Natural killer cell (primary cell): ENCODE measurements at regions of chr2 and their contacts with region 1.

Region 1: DNA sequence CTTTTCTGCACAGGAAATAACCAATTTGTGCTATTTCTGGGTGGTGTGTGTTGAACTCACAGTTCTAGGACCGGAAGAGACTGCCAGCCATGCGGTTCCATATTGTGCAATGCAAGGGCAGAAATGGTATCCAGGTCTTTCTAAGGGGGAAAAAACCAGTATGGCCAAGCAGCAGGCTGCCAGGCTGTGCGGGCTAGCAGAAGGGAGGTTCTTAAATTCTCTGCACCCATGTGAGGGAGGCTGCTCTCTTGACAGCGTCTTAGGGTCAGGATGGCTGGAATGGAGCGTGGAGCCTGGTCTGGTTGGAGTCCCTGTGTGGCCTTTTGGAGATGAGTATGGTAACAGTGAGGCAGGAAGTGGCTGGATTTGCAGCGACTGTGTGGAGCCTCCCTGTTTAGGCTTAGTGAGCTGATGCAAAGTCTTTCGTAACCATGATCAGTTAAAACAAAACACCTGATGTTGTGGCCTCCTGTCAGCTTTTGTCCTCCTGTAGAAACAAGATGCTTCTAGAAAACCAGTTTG is 52.6 kb downstream of the NCK2 start:
- DNase-seq: peak; percentile 54 to 76
- ATAC-seq: peak; percentile 58 to 77 (median 76)
- H3K4me3 ChIP-seq: no peak overlapping the region
- H3K4me3 Mint-ChIP-seq: peak overlapping the region; percentile 81
- H3K27ac ChIP-seq: peak overlapping the region; percentile 69
- H3K27ac Mint-ChIP-seq: peak overlapping the region; percentile 91 to 93
- H3K4me1 ChIP-seq: peaks cover 88% of the 10 kb centered on the region
- H3K4me1 Mint-ChIP-seq: peaks cover 88% of the 10 kb centered on the region in 2 donors
- H3K27me3 ChIP-seq: no peaks in the 10 kb centered on the region
- H3K27me3 Mint-ChIP-seq: no peaks in the 10 kb centered on the region
- CTCF ChIP-seq: no peak

Region 2: GRCh38 chr2:105072039-105072438 is 725.3 kb before region 1 on chr2:
- intact Hi-C with region 1: loop called (anchors 5 kb)
- DNase-seq: peak in 1 of 2 donors; percentile 54
- ATAC-seq: peak; percentile 75 to 84 (median 81)
- H3K4me3 ChIP-seq: no peak overlapping the region
- H3K4me3 Mint-ChIP-seq: peak overlapping the region; percentile 77
- H3K27ac ChIP-seq: peak overlapping the region; percentile 77
- H3K27ac Mint-ChIP-seq: peak overlapping the region; percentile 77 to 85
- H3K4me1 ChIP-seq: peaks cover 25% of the 10 kb centered on the region
- H3K4me1 Mint-ChIP-seq: peaks cover 61 to 62% of the 10 kb centered on the region in 2 donors
- H3K27me3 ChIP-seq: no peaks in the 10 kb centered on the region
- H3K27me3 Mint-ChIP-seq: no peaks in the 10 kb centered on the region
- CTCF ChIP-seq: no peak

Region 3: GRCh38 chr2:105746177-105747080 is 50.9 kb before region 1 on chr2:
- intact Hi-C with region 1: loop called (anchors 2 kb)
- DNase-seq: peak; percentile 54 to 83
- ATAC-seq: peak; percentile 26 to 30 (median 27)
- H3K4me3 ChIP-seq: peak overlapping the region; percentile 64
- H3K4me3 Mint-ChIP-seq: peak overlapping the region; percentile 95
- H3K27ac ChIP-seq: peak overlapping the region; percentile 65
- H3K27ac Mint-ChIP-seq: peak overlapping the region; percentile 91 to 95
- H3K4me1 ChIP-seq: peaks cover 53% of the 10 kb centered on the region
- H3K4me1 Mint-ChIP-seq: peaks cover 67 to 68% of the 10 kb centered on the region in 2 donors
- H3K27me3 ChIP-seq: no peaks in the 10 kb centered on the region
- H3K27me3 Mint-ChIP-seq: no peaks in the 10 kb centered on the region
- CTCF ChIP-seq: no peak

Region 4: GRCh38 chr2:105782123-105782522 is 15.2 kb before region 1 on chr2:
- intact Hi-C with region 1: no loop called
- DNase-seq: peak in 1 of 2 donors; percentile 68
- ATAC-seq: peak in 1 of 3 donors; percentile 46
- H3K4me3 ChIP-seq: no peak overlapping the region
- H3K4me3 Mint-ChIP-seq: no peak overlapping the region
- H3K27ac ChIP-seq: no peak overlapping the region
- H3K27ac Mint-ChIP-seq: peak overlapping the region; percentile 30 to 57
- H3K4me1 ChIP-seq: peaks cover 78% of the 10 kb centered on the region
- H3K4me1 Mint-ChIP-seq: peaks cover 68 to 74% of the 10 kb centered on the region in 2 donors
- H3K27me3 ChIP-seq: no peaks in the 10 kb centered on the region
- H3K27me3 Mint-ChIP-seq: no peaks in the 10 kb centered on the region
- CTCF ChIP-seq: no peak

Region 5: DNA sequence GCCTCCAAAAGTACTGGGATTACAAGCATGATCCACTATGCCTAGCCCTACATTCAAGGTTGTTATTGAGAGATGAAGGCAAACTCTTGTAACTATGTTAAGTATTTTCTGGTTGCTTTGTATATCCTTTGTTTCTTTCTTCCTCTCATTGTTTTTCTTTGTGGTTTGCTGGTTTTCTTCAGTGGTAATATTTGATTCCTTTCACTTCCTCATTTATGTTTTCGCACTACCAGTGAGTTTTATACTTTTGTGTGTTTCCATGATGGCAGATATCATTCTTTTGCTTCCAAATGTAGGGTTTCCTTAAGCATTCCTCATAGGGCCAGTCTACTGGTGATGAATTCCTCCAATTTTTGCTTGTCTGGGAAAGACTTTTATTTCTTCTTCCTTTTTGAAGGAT is 37.6 kb after region 1 on chr2:
- intact Hi-C with region 1: loop called (anchors 5 kb)
- DNase-seq: peak in 1 of 2 donors; percentile 48
- ATAC-seq: no peak
- H3K4me3 ChIP-seq: no peak overlapping the region
- H3K4me3 Mint-ChIP-seq: no peak overlapping the region
- H3K27ac ChIP-seq: peak overlapping the region; percentile 70
- H3K27ac Mint-ChIP-seq: peak overlapping the region; percentile 12 to 75
- H3K4me1 ChIP-seq: peaks cover 22% of the 10 kb centered on the region
- H3K4me1 Mint-ChIP-seq: peaks cover 78 to 83% of the 10 kb centered on the region in 2 donors
- H3K27me3 ChIP-seq: no peaks in the 10 kb centered on the region
- H3K27me3 Mint-ChIP-seq: no peaks in the 10 kb centered on the region
- CTCF ChIP-seq: no peak

Region 6: GRCh38 chr2:105873721-105874120 is 76.4 kb after region 1 on chr2:
- intact Hi-C with region 1: loop called (anchors 5 kb)
- DNase-seq: peak; percentile 35 to 78
- ATAC-seq: peak; percentile 72 to 91 (median 87)
- H3K4me3 ChIP-seq: no peak overlapping the region
- H3K4me3 Mint-ChIP-seq: no peak overlapping the region
- H3K27ac ChIP-seq: no peak overlapping the region
- H3K27ac Mint-ChIP-seq: peak overlapping the region; percentile 75 to 83
- H3K4me1 ChIP-seq: peaks cover 60% of the 10 kb centered on the region
- H3K4me1 Mint-ChIP-seq: peaks cover 61 to 73% of the 10 kb centered on the region in 2 donors
- H3K27me3 ChIP-seq: no peaks in the 10 kb centered on the region
- H3K27me3 Mint-ChIP-seq: no peaks in the 10 kb centered on the region
- CTCF ChIP-seq: no peak